ENCODE measurements at regions of chr11 and their contacts with region 1.

Region 1: GRCh38 chr11:59753650-59754493 is 1.3 kb upstream of the STX3 start:
- DNase-seq: peak; percentile 88
- H3K4me3 Mint-ChIP-seq: peak overlapping the region; percentile 84
- H3K27ac Mint-ChIP-seq: no peak overlapping the region
- H3K4me1 Mint-ChIP-seq: peaks cover 17% of the 10 kb centered on the region
- H3K27me3 Mint-ChIP-seq: peaks cover 3% of the 10 kb centered on the region

Region 2: DNA sequence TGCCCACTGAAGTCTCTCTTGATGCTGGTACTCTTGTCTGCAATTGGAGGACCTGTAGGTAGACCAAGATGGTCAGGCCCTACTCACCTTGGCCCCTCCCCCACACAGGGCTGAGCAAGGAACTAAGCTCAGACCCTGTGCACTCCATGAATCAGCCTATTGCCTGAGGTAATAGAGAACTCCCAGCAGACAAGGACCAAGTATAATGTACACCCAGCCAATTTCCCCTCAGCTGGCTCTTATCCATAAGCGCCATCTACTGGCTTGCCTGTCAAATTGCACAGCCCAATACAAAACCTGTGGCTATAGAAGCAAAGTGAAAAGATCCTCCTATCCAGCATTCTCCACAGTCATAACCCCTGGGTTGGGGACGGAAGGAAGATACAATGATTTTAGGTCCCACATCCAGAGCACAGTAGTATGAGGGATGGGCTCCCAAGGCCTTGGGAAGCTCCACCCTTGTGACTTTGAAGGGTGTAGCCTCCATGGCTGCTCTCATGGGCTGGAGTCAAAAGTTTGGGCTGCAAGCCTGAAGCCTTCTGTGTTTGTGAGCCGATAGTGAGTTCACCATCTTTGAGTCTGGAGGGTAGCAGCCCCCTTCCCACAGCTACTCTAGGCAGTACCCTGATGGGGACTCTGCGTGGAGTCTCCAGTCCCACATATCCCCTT is 965.4 kb before region 1 on chr11:
- CTCF ChIA-PET with region 1: no interaction called
- POLR2A ChIA-PET with region 1: no interaction called
- intact Hi-C with region 1: no loop called
- DNase-seq: peak; percentile 56
- H3K4me3 Mint-ChIP-seq: no peak overlapping the region
- H3K27ac Mint-ChIP-seq: no peak overlapping the region
- H3K4me1 Mint-ChIP-seq: no peaks in the 10 kb centered on the region
- H3K27me3 Mint-ChIP-seq: peaks cover 3% of the 10 kb centered on the region

Region 3: GRCh38 chr11:59668950-59669610 is 84.8 kb before region 1 on chr11 and contains the start of gene PATL1:
- CTCF ChIA-PET with region 1: interaction called, 6 read pairs
- POLR2A ChIA-PET with region 1: no interaction called
- intact Hi-C with region 1: loop called (anchors 1 kb)
- DNase-seq: peak; percentile 99
- H3K4me3 Mint-ChIP-seq: peak within 1 kb of the TSS; percentile 95
- H3K27ac Mint-ChIP-seq: peak within 1 kb of the TSS; percentile 97
- H3K4me1 Mint-ChIP-seq: peaks cover 39% of the 10 kb centered on the region
- H3K27me3 Mint-ChIP-seq: no peaks in the 10 kb centered on the region
- total RNA-seq, gene PATL1: 58.3 to 62.3 TPM

Region 4: DNA sequence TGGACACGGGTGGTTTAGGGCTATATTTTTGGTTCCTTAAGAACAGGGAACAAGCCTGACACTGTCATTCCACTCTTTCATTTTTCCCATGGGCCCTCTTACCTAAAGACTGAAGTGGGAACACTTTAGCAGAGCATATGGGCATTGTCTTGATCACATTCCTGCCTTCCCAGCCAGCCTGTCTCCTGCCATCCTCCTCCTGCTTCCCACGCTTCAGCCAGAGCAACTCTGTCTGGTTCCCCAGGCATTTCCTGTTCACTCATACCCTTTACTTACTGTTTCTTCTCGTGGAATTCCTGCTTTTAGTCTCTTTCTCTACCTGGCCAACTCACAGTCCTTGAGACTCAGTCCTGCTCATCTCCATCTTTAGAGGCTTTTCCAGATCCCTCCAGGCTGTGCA is 33.9 kb after region 1 on chr11:
- CTCF ChIA-PET with region 1: interaction called, 21 read pairs
- POLR2A ChIA-PET with region 1: no interaction called
- intact Hi-C with region 1: no loop called
- DNase-seq: no peak
- H3K4me3 Mint-ChIP-seq: no peak overlapping the region
- H3K27ac Mint-ChIP-seq: no peak overlapping the region
- H3K4me1 Mint-ChIP-seq: peaks cover 13% of the 10 kb centered on the region
- H3K27me3 Mint-ChIP-seq: no peaks in the 10 kb centered on the region

Region 5: GRCh38 chr11:59810189-59810910 is 56.5 kb after region 1 on chr11 and contains the start of gene MRPL16:
- CTCF ChIA-PET with region 1: interaction called, 132 read pairs
- POLR2A ChIA-PET with region 1: no interaction called
- intact Hi-C with region 1: loop called (anchors 1 kb)
- DNase-seq: peak; percentile 95
- H3K4me3 Mint-ChIP-seq: peak within 1 kb of the TSS; percentile 90
- H3K27ac Mint-ChIP-seq: peak within 1 kb of the TSS; percentile 86
- H3K4me1 Mint-ChIP-seq: peaks cover 20% of the 10 kb centered on the region
- H3K27me3 Mint-ChIP-seq: no peaks in the 10 kb centered on the region
- total RNA-seq, gene MRPL16: 80.2 to 80.5 TPM

Region 6: GRCh38 chr11:60084631-60085273 is 330.9 kb after region 1 on chr11:
- CTCF ChIA-PET with region 1: no interaction called
- POLR2A ChIA-PET with region 1: no interaction called
- intact Hi-C with region 1: no loop called
- DNase-seq: no peak
- H3K4me3 Mint-ChIP-seq: no peak overlapping the region
- H3K27ac Mint-ChIP-seq: no peak overlapping the region
- H3K4me1 Mint-ChIP-seq: no peaks in the 10 kb centered on the region
- H3K27me3 Mint-ChIP-seq: peaks cover 33% of the 10 kb centered on the region

Region 7: DNA sequence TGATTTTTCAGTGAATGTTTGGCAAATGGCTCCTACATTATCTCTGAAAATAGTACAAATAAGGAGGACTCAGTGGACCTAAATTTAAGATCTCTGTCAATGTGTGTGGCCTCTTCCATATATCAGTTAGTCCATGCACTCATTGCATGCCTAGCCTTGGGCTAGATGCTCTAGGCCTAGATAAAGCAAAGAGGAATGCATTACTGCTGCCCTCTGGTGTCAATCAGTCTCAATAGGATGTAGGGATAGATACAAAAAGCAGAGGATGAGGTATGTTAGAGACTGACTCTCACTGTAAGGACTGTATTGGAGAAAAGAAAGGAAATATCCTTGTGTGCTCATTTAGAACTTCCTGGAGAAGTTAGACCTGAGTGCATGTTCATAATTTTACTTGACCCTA is 376.6 kb after region 1 on chr11:
- CTCF ChIA-PET with region 1: no interaction called
- POLR2A ChIA-PET with region 1: no interaction called
- intact Hi-C with region 1: loop called (anchors 1 kb)
- DNase-seq: no peak
- H3K4me3 Mint-ChIP-seq: no peak overlapping the region
- H3K27ac Mint-ChIP-seq: no peak overlapping the region
- H3K4me1 Mint-ChIP-seq: no peaks in the 10 kb centered on the region
- H3K27me3 Mint-ChIP-seq: peaks cover 5% of the 10 kb centered on the region